Heart right ventricle (tissue), 16 donors: ENCODE measurements at regions of chr13 and their contacts with region 1.

Region 1: DNA sequence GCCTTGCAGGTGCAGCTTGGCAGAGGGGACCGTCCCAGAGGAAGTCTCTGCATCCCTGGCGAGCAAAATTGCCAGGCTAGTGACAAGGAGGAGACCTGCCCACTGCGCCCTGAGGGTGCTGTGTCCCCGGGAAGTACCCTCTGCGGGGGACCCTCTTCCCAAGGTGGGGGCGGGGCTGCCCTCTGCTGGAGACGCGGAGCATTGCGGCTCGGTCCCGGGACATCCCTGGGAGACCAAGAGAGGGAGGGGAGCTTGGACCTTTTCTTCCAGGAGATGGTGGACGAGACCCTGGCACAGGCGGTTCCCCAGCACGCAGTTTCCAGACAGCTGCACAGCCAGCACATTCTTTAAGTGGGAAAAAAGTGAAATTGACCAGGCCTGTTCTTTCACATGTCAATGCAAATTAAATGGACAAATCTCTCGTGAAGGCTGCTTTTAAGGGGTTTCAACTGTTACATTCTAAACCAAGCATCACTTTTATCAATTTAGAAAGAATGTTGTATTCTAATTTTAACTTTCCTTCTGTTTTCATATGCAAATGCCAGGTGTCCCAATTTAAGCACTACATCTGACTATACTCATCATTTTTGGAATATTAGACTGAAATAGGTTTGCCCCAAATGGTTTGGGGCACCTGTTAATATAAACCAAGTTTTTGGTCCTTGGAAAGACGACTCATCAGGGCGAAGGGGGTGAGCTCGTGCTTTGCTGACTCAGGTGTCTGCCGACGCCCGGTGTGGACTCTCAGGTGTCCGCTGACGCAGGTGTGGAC is 60.7 kb downstream of the MCF2L start:
- DNase-seq: peak in 1 of 2 donors; percentile 54
- ATAC-seq: peak; percentile 19 to 57 (median 45)
- H3K4me3 ChIP-seq: no peak overlapping the region
- H3K27ac ChIP-seq: no peak overlapping the region
- H3K4me1 ChIP-seq: peaks cover 0 to 15% (median 0%) of the 10 kb centered on the region in 9 donors
- H3K27me3 ChIP-seq: peaks cover 0 to 4% (median 0%) of the 10 kb centered on the region in 7 donors
- CTCF ChIP-seq: peak; percentile 61 to 88 (median 83)

Region 2: GRCh38 chr13:113153810-113154748 is 124.4 kb after region 1 on chr13:
- intact Hi-C with region 1: loop called in 1 of 10 experiments (anchors 10 kb)
- DNase-seq: peak; percentile 83 to 86
- ATAC-seq: peak; percentile 68 to 92 (median 86)
- H3K4me3 ChIP-seq: peak overlapping the region; percentile 39 to 62 (median 48)
- H3K27ac ChIP-seq: peak overlapping the region; percentile 53 to 93 (median 87)
- H3K4me1 ChIP-seq: peaks cover 8 to 25% (median 12%) of the 10 kb centered on the region in 9 donors
- H3K27me3 ChIP-seq: peaks cover 0 to 20% (median 1%) of the 10 kb centered on the region in 7 donors
- CTCF ChIP-seq: no peak

Region 3: DNA sequence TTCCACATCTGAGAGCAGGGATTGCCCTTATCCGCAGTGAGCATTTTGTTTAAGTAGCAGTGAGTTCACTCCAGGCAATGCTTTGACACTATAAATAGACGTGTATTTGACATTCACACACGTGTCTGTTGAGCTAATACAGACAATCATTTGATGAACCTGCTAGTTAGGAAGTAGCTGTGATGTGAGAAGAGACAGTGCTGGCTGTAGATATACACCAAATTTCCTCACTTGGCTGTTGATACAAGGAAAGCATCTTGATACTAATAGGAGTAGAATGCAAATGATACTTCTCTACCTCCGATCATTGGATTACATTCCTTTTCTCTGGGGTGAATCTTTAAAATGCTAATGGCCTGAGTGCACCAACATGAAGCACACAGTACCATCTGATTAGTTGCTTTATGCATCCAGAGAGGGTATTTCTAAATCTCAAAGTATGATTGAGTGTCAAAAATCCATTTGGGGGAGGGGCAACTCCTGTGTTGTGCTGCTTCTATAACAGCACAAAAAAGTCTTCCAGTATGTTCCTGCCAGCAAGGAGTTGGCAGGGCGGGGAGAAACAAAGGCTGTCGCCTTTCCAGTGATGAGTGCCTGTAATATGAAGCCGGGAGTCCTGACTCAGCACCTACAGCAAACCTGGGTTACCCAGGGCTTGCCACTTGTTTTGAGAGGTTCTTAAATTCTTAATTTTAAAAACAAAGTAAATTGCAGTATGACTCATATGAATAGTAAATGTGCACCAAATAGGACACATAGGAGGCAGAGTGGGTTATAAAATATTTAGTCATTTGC is 186.8 kb after region 1 on chr13:
- intact Hi-C with region 1: loop called in 4 of 10 experiments (anchors 10 kb)
- DNase-seq: peak in 1 of 2 donors; percentile 51
- ATAC-seq: peak; percentile 75 to 91 (median 84)
- H3K4me3 ChIP-seq: no peak overlapping the region
- H3K27ac ChIP-seq: peak overlapping the region; percentile 38 to 83 (median 73)
- H3K4me1 ChIP-seq: peaks cover 10 to 98% (median 66%) of the 10 kb centered on the region in 9 donors
- H3K27me3 ChIP-seq: no peaks in the 10 kb centered on the region
- CTCF ChIP-seq: no peak

Region 4: GRCh38 chr13:113226873-113227450 is 197.3 kb after region 1 on chr13:
- intact Hi-C with region 1: loop called in 5 of 10 experiments (anchors 2 to 10 kb)
- DNase-seq: no peak
- ATAC-seq: peak in 1 of 8 donors; percentile 9
- H3K4me3 ChIP-seq: no peak overlapping the region
- H3K27ac ChIP-seq: no peak overlapping the region
- H3K4me1 ChIP-seq: peaks cover 0 to 19% (median 5%) of the 10 kb centered on the region in 9 donors
- H3K27me3 ChIP-seq: no peaks in the 10 kb centered on the region
- CTCF ChIP-seq: no peak

Region 5: DNA sequence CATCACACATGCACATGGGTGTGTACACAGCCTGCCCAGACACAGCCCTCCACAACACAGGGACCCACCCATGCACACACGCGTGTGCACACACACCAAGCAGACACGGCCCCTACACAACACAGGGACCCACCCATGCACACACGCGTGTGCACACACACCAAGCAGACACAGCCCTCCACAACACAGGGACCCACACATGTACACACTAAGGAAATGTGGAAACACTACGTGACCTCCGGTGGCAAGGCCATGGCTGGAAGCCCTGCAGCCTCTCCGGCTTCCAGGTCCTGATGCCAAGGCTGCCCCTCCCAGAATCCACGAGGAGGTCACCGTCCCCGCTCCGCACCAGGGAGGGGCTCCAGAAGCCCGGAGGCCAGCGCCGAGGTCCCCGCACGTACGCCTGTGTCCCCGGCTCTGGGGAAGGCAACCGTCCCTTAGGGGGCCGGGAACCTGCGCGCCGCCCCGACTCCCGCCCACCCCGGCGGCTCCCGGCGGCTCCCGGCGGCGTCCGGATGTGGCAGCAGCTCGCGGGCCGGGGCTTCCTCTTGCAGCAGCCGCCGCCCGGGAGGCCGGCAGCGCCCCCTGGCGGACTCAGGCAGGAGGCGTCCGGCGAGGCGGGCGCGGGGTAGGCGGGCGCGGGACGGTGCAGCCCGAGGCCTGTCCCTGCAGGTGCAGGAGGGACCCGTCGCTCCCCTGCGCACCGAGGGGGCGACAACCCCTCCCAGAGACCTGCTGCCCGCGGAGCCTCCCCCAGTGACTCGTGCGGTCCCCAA is 364.1 kb after region 1 on chr13:
- intact Hi-C with region 1: loop called in 3 of 10 experiments (anchors 10 kb)
- DNase-seq: peak; percentile 67 to 84
- ATAC-seq: peak; percentile 77 to 93 (median 85)
- H3K4me3 ChIP-seq: peak overlapping the region; percentile 68 to 97 (median 81)
- H3K27ac ChIP-seq: peak overlapping the region in 9 of 10 donors; percentile 64 to 87 (median 81)
- H3K4me1 ChIP-seq: peaks cover 0 to 28% (median 11%) of the 10 kb centered on the region in 9 donors
- H3K27me3 ChIP-seq: no peaks in the 10 kb centered on the region
- CTCF ChIP-seq: peak; percentile 77 to 98 (median 89)